Gastrocnemius medialis (tissue), 4 donors: ENCODE measurements at regions of chr17 and their contacts with region 1.

Region 1: GRCh38 chr17:28112220-28113005 is 69.9 kb downstream of the NLK start:
- DNase-seq: no peak
- ATAC-seq: no peak
- H3K4me3 ChIP-seq: no peak overlapping the region
- H3K27ac ChIP-seq: peak overlapping the region in 2 of 4 donors; percentile 7 to 21
- H3K4me1 ChIP-seq: peaks cover 0 to 17% of the 10 kb centered on the region in 2 donors
- H3K27me3 ChIP-seq: no peaks in the 10 kb centered on the region
- CTCF ChIP-seq: no peak
- POLR2A ChIP-seq: no peak

Region 2: GRCh38 chr17:28057731-28058279 is 54.6 kb before region 1 on chr17:
- in situ Hi-C with region 1: no loop called
- intact Hi-C with region 1: no loop called
- DNase-seq: no peak
- ATAC-seq: no peak
- H3K4me3 ChIP-seq: no peak overlapping the region
- H3K27ac ChIP-seq: no peak overlapping the region
- H3K4me1 ChIP-seq: peaks cover 0 to 12% of the 10 kb centered on the region in 2 donors
- H3K27me3 ChIP-seq: no peaks in the 10 kb centered on the region
- CTCF ChIP-seq: no peak
- POLR2A ChIP-seq: no peak

Region 3: DNA sequence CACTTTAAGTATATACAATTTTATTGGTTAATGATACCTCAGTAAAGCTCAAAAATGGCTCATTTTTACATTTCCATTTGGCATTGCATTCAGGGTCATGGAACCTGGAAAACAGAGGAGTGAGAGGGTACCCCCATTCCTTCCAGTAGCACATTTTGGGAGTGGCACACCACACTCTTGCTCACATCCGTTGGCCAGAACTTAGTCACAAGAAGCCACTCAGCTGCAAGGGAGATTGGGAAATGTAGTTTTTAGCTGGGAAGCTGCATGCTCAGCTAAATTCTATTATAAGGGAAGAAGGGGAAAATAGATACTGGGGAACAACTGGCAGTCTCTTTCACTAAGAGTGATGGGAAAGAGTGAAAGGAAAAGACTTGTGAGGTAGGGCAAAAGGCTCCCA is 104.1 kb after region 1 on chr17:
- in situ Hi-C with region 1: loop called in 1 of 4 experiments (anchors 25 kb)
- intact Hi-C with region 1: no loop called
- DNase-seq: no peak
- ATAC-seq: no peak
- H3K4me3 ChIP-seq: no peak overlapping the region
- H3K27ac ChIP-seq: no peak overlapping the region
- H3K4me1 ChIP-seq: no peaks in the 10 kb centered on the region
- H3K27me3 ChIP-seq: no peaks in the 10 kb centered on the region
- CTCF ChIP-seq: no peak
- POLR2A ChIP-seq: no peak